AG04449 (cell line): ENCODE measurements at regions of chr7 and their contacts with region 1.

Region 1: GRCh38 chr7:90403174-90404113 is at the start of gene CLDN12:
- DNase-seq: peak; percentile 91
- H3K4me3 ChIP-seq: peak within 1 kb of the TSS; percentile 69
- CTCF ChIP-seq: no peak

Region 2: GRCh38 chr7:90383422-90383821 is 20.0 kb before region 1 on chr7:
- CTCF ChIA-PET with region 1: no interaction called
- POLR2A ChIA-PET with region 1: interaction called, 13 read pairs
- DNase-seq: peak; percentile 49
- H3K4me3 ChIP-seq: no peak overlapping the region
- CTCF ChIP-seq: no peak